ENCODE measurements at regions of chr2 and their contacts with region 1.

Region 1: DNA sequence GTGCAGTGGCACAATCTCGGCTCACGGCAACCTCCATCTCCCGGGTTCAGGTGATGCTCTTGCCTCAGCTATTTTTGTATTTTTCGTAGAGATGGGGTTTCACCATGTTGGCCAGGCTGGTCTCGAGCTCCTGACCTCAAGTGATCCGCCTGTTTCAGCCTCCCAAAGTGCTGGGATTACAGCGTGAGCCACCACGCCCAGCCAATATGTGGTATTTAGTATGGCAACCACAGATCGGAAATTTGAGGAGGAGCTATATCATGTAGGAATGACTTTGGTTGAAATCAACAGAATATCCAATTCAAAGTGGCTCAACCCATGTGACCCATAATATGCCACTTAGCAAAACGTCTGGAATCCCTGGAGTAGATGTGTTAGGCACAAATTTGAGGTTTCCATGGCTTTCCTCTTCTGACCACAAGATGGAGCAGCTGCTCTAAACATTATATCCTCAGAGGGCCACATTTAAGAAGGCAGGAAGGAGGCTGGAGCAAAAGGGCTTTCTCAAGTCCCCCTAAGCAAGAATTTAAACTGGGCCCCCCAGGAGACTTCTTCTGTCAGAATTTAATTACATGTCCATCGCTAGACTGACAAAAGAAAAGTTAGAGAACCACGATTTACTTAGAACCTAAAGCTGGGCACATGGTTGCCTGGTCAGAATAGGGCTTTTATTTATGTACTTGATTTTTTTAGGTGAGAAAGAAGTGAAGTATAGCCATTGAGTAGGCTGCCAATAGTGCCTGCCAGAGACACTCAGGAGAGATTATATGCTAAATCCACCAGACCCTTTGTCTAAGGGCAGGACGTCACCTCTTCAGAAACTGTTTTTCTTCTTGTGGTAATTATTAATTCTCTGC is 49.6 kb upstream of the ITSN2 start:
- DNase-seq: no peak
- H3K4me3 ChIP-seq: no peak overlapping the region
- H3K27ac ChIP-seq: no peak overlapping the region
- H3K4me1 ChIP-seq: no peaks in the 10 kb centered on the region
- H3K27me3 ChIP-seq: peaks cover 0 to 16% (median 0%) of the 10 kb centered on the region in 7 donors
- CTCF ChIP-seq: peak; percentile 69 to 86 (median 81)
- POLR2A ChIP-seq: no peak

Region 2: DNA sequence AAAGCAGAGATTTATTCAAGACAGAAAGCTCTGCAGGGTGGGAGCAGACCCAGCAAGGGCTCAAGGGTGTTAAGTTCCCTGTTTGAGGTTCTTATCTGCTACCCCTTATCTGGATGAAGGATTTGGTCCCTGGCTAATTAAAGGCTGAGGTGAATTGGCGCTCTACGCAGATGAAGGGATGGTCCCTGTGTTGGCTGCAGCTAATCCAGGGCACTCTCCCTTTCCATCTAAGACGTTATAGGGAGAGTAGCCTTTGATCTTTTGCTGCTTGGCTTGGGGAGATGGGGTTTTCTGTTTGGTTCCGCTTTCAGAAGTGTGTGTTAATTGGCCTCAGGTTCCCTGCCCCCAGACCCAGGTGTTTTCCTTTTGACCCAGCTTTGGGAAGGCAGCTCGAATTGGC is 218.1 kb before region 1 on chr2:
- intact Hi-C with region 1: no loop called
- DNase-seq: no peak
- H3K4me3 ChIP-seq: no peak overlapping the region
- H3K27ac ChIP-seq: no peak overlapping the region
- H3K4me1 ChIP-seq: no peaks in the 10 kb centered on the region
- H3K27me3 ChIP-seq: no peaks in the 10 kb centered on the region
- CTCF ChIP-seq: no peak
- POLR2A ChIP-seq: no peak

Region 3: DNA sequence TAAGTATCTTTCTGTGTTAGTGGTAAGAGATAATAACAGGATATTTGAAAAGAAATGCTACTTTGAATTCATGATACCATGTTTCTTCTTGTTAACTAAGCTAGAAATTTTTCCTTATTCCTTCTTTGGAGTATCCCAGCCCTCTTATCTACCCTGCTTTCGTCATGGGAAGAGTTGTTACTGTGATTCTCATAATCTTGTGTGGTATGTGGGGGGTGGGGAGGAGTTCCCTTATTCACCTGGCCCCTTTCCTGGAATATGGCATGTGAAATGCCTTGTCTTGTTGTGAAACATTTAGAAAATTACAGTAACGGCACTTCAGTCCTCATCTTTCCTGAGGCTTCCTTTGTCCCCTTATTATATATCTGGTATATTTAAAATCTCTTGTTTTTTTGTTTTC is 211.0 kb after region 1 on chr2:
- intact Hi-C with region 1: no loop called
- DNase-seq: no peak
- H3K4me3 ChIP-seq: no peak overlapping the region
- H3K27ac ChIP-seq: no peak overlapping the region
- H3K4me1 ChIP-seq: peaks cover 0 to 26% (median 0%) of the 10 kb centered on the region in 6 donors
- H3K27me3 ChIP-seq: no peaks in the 10 kb centered on the region
- CTCF ChIP-seq: no peak
- POLR2A ChIP-seq: no peak

Region 4: GRCh38 chr2:24827321-24828237 is 417.7 kb after region 1 on chr2:
- intact Hi-C with region 1: loop called (anchors 2 kb)
- DNase-seq: peak; percentile 87
- H3K4me3 ChIP-seq: no peak overlapping the region
- H3K27ac ChIP-seq: no peak overlapping the region
- H3K4me1 ChIP-seq: peaks cover 0 to 19% (median 5%) of the 10 kb centered on the region in 6 donors
- H3K27me3 ChIP-seq: no peaks in the 10 kb centered on the region
- CTCF ChIP-seq: peak; percentile 81 to 96 (median 89)
- POLR2A ChIP-seq: no peak